ENCODE measurements at regions of chr2 and their contacts with region 1.

Region 1: GRCh38 chr2:17672583-17673317 is 80.9 kb downstream of the SMC6 start:
- DNase-seq: no peak
- ATAC-seq: no peak
- H3K4me3 ChIP-seq: no peak overlapping the region
- H3K27ac ChIP-seq: no peak overlapping the region
- H3K4me1 ChIP-seq: no peaks in the 10 kb centered on the region
- H3K27me3 ChIP-seq: no peaks in the 10 kb centered on the region
- CTCF ChIP-seq: no peak; the same call in 1 of the 2 replicates

Region 2: DNA sequence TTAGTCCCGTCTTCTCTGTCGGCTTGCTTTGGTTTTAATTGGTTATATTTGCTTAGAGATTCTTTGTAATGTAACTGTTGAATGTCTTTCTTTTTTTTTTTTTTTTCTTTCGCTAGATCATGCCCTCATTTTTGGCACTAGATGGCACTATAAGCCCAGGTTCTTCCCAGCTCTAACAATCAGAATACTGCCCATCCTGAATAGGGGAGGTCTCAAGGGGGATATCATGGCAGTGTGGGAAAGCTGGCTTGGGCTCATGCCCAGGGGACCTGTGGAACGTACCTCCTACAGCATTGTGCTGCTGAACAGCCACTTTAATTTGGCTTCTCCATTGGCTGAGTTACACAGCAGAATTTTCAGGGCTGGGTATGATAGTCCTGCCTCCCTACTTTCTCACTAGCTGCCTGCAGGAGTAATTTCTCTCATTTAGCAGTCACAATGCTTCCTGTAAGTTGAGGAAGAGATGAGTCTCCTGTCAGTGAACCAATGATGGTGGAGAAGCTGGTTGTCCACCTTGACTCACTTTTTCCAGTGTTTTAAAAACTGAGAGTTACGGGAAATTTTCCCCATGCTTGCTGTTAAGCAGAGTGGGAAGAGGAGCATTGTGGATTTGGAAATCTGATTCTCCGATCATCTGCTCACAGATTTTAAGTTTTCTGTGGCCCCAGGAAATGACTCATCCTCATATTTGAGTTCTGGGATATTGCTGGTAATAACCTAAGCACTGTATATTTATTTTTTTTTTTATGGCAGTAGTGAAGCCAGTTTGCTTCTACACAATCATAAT is 201.7 kb before region 1 on chr2:
- CTCF ChIA-PET with region 1: interaction called, 16 read pairs
- POLR2A ChIA-PET with region 1: no interaction called
- in situ Hi-C with region 1: no loop called
- intact Hi-C with region 1: loop called (anchors 5 kb)
- DNase-seq: peak; percentile 17
- ATAC-seq: no peak
- H3K4me3 ChIP-seq: no peak overlapping the region
- H3K27ac ChIP-seq: no peak overlapping the region
- H3K4me1 ChIP-seq: no peaks in the 10 kb centered on the region
- H3K27me3 ChIP-seq: no peaks in the 10 kb centered on the region
- CTCF ChIP-seq: peak; percentile 52

Region 3: GRCh38 chr2:17646081-17646554 is 26.6 kb before region 1 on chr2:
- CTCF ChIA-PET with region 1: interaction called, 18 read pairs
- POLR2A ChIA-PET with region 1: no interaction called
- in situ Hi-C with region 1: no loop called
- intact Hi-C with region 1: loop called (anchors 1 kb)
- DNase-seq: peak; percentile 72
- ATAC-seq: peak; percentile 49; the same call in 1 of the 2 replicates
- H3K4me3 ChIP-seq: no peak overlapping the region
- H3K27ac ChIP-seq: no peak overlapping the region
- H3K4me1 ChIP-seq: peaks cover 3% of the 10 kb centered on the region
- H3K27me3 ChIP-seq: no peaks in the 10 kb centered on the region
- CTCF ChIP-seq: peak; percentile 86

Region 4: DNA sequence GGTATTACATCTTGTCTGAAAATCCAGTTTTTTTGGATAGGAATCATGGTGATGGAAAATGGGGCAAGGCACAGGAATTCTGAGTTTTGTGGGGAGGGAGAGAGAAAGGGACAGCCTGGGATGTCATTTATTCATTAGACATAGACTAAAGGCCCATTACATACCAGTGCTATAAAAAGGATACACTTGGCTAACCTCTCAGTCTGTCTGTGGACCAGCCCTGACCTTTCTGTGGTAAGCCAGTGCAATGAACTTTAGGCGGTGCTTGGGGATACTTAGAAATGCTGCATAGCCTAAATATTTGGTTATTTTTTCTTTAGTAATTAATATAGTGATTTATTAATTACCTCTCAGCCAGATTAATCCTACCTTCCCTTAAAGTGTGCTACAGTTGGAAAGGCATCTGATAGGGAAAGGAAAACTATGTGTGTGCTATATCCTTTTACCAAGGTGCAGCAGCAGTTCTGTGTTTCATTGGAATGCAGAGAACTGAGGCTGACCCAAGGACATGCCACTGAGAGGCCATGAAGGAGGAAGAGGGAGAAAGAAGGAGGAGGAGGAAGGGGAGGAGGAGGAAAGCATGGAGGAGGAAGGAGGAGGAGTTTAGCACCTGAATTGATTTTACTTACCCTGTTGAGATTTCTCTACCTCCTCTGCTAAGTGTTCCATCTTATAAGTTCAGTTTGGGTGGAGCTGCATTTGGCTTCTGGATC is 243.2 kb after region 1 on chr2:
- CTCF ChIA-PET with region 1: interaction called, 10 read pairs
- POLR2A ChIA-PET with region 1: no interaction called
- in situ Hi-C with region 1: no loop called
- intact Hi-C with region 1: no loop called
- DNase-seq: no peak
- ATAC-seq: no peak
- H3K4me3 ChIP-seq: no peak overlapping the region
- H3K27ac ChIP-seq: no peak overlapping the region
- H3K4me1 ChIP-seq: no peaks in the 10 kb centered on the region
- H3K27me3 ChIP-seq: no peaks in the 10 kb centered on the region
- CTCF ChIP-seq: no peak